ENCODE measurements at regions of chr2 and their contacts with region 1.

Region 1: GRCh38 chr2:179020156-179020750 is 29.7 kb downstream of the CCDC141 start:
- DNase-seq: no peak
- ATAC-seq: peak; percentile 73
- H3K4me3 ChIP-seq: no peak overlapping the region
- H3K27ac ChIP-seq: peak overlapping the region; percentile 71; the same call in 1 of the 2 replicates
- H3K4me1 ChIP-seq: peaks cover 34% of the 10 kb centered on the region
- H3K27me3 ChIP-seq: no peaks in the 10 kb centered on the region
- CTCF ChIP-seq: peak; percentile 68 to 73 (median 69)
- EP300 ChIP-seq: no peak
- POLR2A ChIP-seq: no peak
- RAD21 ChIP-seq: peak; percentile 89

Region 2: GRCh38 chr2:178891265-178891958 is 128.8 kb before region 1 on chr2:
- CTCF ChIA-PET with region 1: interaction called, 82 read pairs
- POLR2A ChIA-PET with region 1: no interaction called
- RAD21 ChIA-PET with region 1: interaction called, 38 read pairs
- SMC1A ChIA-PET with region 1: interaction called, 80 read pairs
- in situ Hi-C with region 1: no loop called
- intact Hi-C with region 1: loop called (anchors 1 kb)
- DNase-seq: peak; percentile 33
- ATAC-seq: peak; percentile 94
- H3K4me3 ChIP-seq: no peak overlapping the region
- H3K27ac ChIP-seq: no peak overlapping the region
- H3K4me1 ChIP-seq: no peaks in the 10 kb centered on the region
- H3K27me3 ChIP-seq: no peaks in the 10 kb centered on the region
- CTCF ChIP-seq: peak; percentile 87 to 91 (median 90)
- EP300 ChIP-seq: no peak
- POLR2A ChIP-seq: no peak
- RAD21 ChIP-seq: peak; percentile 89

Region 3: GRCh38 chr2:178920916-178921513 is 99.2 kb before region 1 on chr2:
- CTCF ChIA-PET with region 1: interaction called, 11 read pairs
- POLR2A ChIA-PET with region 1: no interaction called
- RAD21 ChIA-PET with region 1: interaction called, 22 read pairs
- SMC1A ChIA-PET with region 1: interaction called, 76 read pairs
- in situ Hi-C with region 1: no loop called
- intact Hi-C with region 1: no loop called
- DNase-seq: no peak
- ATAC-seq: no peak
- H3K4me3 ChIP-seq: no peak overlapping the region
- H3K27ac ChIP-seq: no peak overlapping the region
- H3K4me1 ChIP-seq: no peaks in the 10 kb centered on the region
- H3K27me3 ChIP-seq: no peaks in the 10 kb centered on the region
- CTCF ChIP-seq: no peak
- EP300 ChIP-seq: no peak
- POLR2A ChIP-seq: no peak
- RAD21 ChIP-seq: no peak

Region 4: GRCh38 chr2:178976351-178976750 is 43.9 kb before region 1 on chr2:
- CTCF ChIA-PET with region 1: interaction called, 17 read pairs
- POLR2A ChIA-PET with region 1: no interaction called
- RAD21 ChIA-PET with region 1: interaction called, 5 read pairs
- SMC1A ChIA-PET with region 1: interaction called, 16 read pairs
- in situ Hi-C with region 1: no loop called
- intact Hi-C with region 1: no loop called
- DNase-seq: no peak
- ATAC-seq: no peak
- H3K4me3 ChIP-seq: no peak overlapping the region
- H3K27ac ChIP-seq: no peak overlapping the region
- H3K4me1 ChIP-seq: no peaks in the 10 kb centered on the region
- H3K27me3 ChIP-seq: no peaks in the 10 kb centered on the region
- CTCF ChIP-seq: no peak
- EP300 ChIP-seq: no peak
- POLR2A ChIP-seq: no peak
- RAD21 ChIP-seq: no peak

Region 5: DNA sequence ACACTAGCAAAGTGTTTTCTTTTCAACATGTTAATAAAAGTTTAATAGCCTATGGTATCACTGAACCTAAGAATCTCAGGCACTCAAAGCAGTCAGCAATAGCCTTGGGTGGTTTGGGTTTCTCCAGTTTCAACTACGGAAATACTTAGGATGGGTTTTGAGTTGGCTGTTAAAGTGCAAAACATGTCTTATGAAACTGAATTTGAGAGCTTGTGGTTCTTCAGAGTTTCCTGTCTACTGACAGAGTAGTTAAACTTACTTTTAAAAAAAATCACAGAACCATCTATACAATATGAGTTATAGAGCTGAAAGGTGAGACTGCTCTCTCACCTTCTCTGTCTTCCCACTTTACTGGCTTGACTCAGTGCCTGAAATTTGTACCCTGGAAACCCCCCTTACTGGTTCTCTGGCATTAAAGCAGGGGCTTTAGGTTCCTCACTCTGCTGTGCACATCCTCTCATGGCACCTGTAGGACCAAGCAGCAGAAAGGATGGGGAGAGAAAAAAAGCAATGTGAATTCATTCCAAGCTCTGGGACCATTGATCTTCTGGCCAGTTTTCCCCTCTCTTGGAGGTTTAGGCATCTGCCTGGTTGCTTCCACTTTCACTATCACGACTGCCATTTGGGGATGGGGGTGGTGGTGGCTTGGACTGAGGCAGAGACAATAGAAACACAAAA is 11.6 kb after region 1 on chr2:
- CTCF ChIA-PET with region 1: interaction called, 66 read pairs
- POLR2A ChIA-PET with region 1: interaction called, 49 read pairs
- RAD21 ChIA-PET with region 1: interaction called, 101 read pairs
- SMC1A ChIA-PET with region 1: interaction called, 142 read pairs
- in situ Hi-C with region 1: no loop called
- intact Hi-C with region 1: loop called (anchors 1 kb)
- DNase-seq: peak; percentile 88
- ATAC-seq: peak; percentile 94
- H3K4me3 ChIP-seq: peak overlapping the region; percentile 46
- H3K27ac ChIP-seq: peak overlapping the region; percentile 95
- H3K4me1 ChIP-seq: peaks cover 15% of the 10 kb centered on the region
- H3K27me3 ChIP-seq: no peaks in the 10 kb centered on the region
- CTCF ChIP-seq: no peak
- EP300 ChIP-seq: peak; percentile 51 to 65; a peak in 2 of 4 replicates
- POLR2A ChIP-seq: no peak
- RAD21 ChIP-seq: 0 out of 2 replicates have a peak, but pooled peaks have one; percentile 9

Region 6: DNA sequence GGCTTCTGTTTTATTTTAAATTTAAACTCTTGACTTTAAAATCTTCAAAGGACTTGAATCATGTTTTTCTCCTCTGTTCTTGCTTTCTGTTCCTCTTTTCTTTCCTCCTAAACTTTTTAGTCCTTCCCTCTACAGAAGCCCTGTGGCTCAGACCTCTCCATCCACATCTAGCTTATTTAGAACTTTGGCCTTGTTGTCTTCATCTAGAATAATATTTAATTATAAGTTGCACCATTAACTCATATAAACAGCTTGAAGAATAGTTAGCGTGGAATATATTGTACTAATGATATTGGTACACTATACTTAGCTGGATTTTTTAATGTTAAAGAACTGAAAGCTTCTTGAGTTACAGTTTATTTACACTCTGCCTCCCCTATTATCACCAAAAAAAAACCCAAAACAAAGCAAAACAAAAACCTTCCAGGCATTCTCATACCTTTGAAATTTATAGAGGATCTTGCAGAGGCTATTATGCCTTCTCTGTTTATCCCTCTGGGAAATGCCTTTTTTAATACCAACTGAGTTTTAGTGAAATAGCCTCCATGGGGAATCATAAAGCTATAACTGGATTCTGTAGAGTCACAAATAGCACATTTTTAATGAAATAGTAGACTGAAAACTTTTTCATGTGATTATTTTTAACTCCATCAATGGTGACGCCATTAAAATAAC is 38.9 kb after region 1 on chr2:
- CTCF ChIA-PET with region 1: interaction called, 15 read pairs
- POLR2A ChIA-PET with region 1: interaction called, 3 read pairs
- RAD21 ChIA-PET with region 1: interaction called, 11 read pairs
- SMC1A ChIA-PET with region 1: interaction called, 89 read pairs
- in situ Hi-C with region 1: no loop called
- intact Hi-C with region 1: no loop called
- DNase-seq: no peak
- ATAC-seq: peak; percentile 94
- H3K4me3 ChIP-seq: no peak overlapping the region
- H3K27ac ChIP-seq: peak overlapping the region; percentile 4; the same call in 1 of the 2 replicates
- H3K4me1 ChIP-seq: peaks cover 9% of the 10 kb centered on the region
- H3K27me3 ChIP-seq: no peaks in the 10 kb centered on the region
- CTCF ChIP-seq: no peak
- EP300 ChIP-seq: no peak
- POLR2A ChIP-seq: no peak
- RAD21 ChIP-seq: no peak

Measured in GM12878 (cell line).